Caco-2 (cell line): ENCODE measurements at regions of chr12 and their contacts with region 1.

Region 1: GRCh38 chr12:3275171-3276041 is 198.2 kb downstream of the TSPAN9 start:
- DNase-seq: peak; percentile 68 to 86
- H3K4me3 ChIP-seq: no peak overlapping the region
- H3K4me3 Mint-ChIP-seq: no peak overlapping the region
- H3K27ac Mint-ChIP-seq: no peak overlapping the region
- H3K4me1 ChIP-seq: no peaks in the 10 kb centered on the region
- H3K4me1 Mint-ChIP-seq: no peaks in the 10 kb centered on the region
- H3K27me3 ChIP-seq: no peaks in the 10 kb centered on the region
- H3K27me3 Mint-ChIP-seq: no peaks in the 10 kb centered on the region
- CTCF ChIP-seq: peak; percentile 99

Region 2: GRCh38 chr12:3242199-3242863 is 33.1 kb before region 1 on chr12:
- CTCF ChIA-PET with region 1: interaction called, 17 read pairs
- POLR2A ChIA-PET with region 1: no interaction called
- intact Hi-C with region 1: no loop called
- DNase-seq: peak in 1 of 2 experiments; percentile 43
- H3K4me3 ChIP-seq: no peak overlapping the region
- H3K4me3 Mint-ChIP-seq: no peak overlapping the region
- H3K27ac Mint-ChIP-seq: peak overlapping the region; percentile 11
- H3K4me1 ChIP-seq: peaks cover 24% of the 10 kb centered on the region
- H3K4me1 Mint-ChIP-seq: peaks cover 13% of the 10 kb centered on the region
- H3K27me3 ChIP-seq: no peaks in the 10 kb centered on the region
- H3K27me3 Mint-ChIP-seq: no peaks in the 10 kb centered on the region
- CTCF ChIP-seq: peak in 1 of 2 experiments; percentile 7

Region 3: GRCh38 chr12:3257411-3258139 is 17.8 kb before region 1 on chr12:
- CTCF ChIA-PET with region 1: no interaction called
- POLR2A ChIA-PET with region 1: no interaction called
- intact Hi-C with region 1: no loop called
- DNase-seq: no peak
- H3K4me3 ChIP-seq: no peak overlapping the region
- H3K4me3 Mint-ChIP-seq: no peak overlapping the region
- H3K27ac Mint-ChIP-seq: no peak overlapping the region
- H3K4me1 ChIP-seq: no peaks in the 10 kb centered on the region
- H3K4me1 Mint-ChIP-seq: no peaks in the 10 kb centered on the region
- H3K27me3 ChIP-seq: no peaks in the 10 kb centered on the region
- H3K27me3 Mint-ChIP-seq: no peaks in the 10 kb centered on the region
- CTCF ChIP-seq: no peak

Region 4: DNA sequence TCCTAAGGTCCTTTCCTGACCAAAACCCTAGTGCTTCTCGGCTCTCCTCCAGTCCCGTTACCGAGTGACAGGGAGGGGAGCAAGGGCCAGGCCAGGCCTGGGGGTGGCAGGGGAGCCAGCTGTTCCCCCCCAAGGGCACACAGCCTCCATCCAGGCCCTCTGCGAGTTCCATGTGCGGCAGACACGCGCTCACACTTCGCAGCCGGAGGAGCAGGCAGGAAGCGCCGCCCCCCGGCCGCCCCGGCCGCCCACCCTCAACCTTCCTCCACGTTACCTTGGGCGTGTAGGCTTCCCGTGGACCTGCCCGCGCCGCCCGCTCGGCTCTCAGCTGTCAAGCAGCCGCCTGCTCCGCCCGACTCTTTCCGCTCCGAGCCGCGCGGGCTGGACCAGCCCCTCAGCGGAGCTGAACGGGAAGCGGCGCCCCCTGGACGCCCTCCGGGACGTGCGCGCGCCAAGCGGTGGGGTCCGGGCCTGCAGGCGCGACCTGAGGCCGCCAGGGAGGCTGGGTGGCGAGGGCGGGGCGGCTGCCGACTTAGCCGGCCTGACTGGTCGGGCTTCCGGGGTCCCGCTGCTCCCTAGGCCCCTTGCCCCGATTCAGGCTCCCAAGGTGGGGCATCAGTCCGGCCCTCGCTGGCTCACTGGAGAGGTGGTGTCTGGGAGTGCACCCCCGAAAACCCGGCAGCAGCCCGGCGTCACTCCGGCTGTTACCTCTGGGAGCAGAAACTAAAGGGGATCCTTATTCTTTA is 477.5 kb after region 1 on chr12 and contains the start of gene CRACR2A:
- CTCF ChIA-PET with region 1: no interaction called
- POLR2A ChIA-PET with region 1: no interaction called
- intact Hi-C with region 1: no loop called
- DNase-seq: peak; percentile 84 to 92
- H3K4me3 ChIP-seq: peak within 1 kb of the TSS; percentile 67
- H3K4me3 Mint-ChIP-seq: peak within 1 kb of the TSS; percentile 64
- H3K27ac Mint-ChIP-seq: peak within 1 kb of the TSS; percentile 24
- H3K4me1 ChIP-seq: 0 out of 2 replicates have a peak, but pooled peaks cover 3% of the 10 kb centered on the region
- H3K4me1 Mint-ChIP-seq: peaks cover 14% of the 10 kb centered on the region
- H3K27me3 ChIP-seq: no peaks in the 10 kb centered on the region
- H3K27me3 Mint-ChIP-seq: no peaks in the 10 kb centered on the region
- CTCF ChIP-seq: peak; percentile 75 to 85
- total RNA-seq, gene CRACR2A: 15.4 and 16.5 TPM in 2 replicates